Left ventricle myocardium superior (tissue), 1 donor: ENCODE measurements at regions of chrX and their contacts with region 1.

Region 1: GRCh38 chrX:17242470-17242869 is 132.5 kb upstream of the NHS start:
- DNase-seq: no peak
- ATAC-seq: peak; percentile 37

Region 2: DNA sequence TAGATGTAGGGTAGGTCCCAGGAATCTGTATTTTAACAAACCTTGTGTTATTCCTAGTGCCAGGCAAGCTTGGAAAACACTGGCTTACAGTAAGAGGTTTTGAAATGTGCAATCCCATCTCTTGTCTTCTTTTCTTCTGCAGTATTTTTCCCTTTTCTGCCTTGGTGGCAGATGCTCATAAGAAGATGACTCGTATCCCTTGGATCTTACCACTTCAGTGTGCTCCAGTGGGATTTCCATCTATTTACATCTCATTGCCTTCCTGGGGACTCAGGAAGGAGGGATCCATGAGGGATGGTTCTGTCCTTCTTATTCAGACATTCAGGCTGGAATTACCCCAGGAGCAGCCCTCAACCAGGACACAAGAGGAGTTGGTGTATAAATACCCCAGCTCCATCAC is 269.1 kb after region 1 on chrX:
- intact Hi-C with region 1: no loop called
- DNase-seq: no peak
- ATAC-seq: no peak

Region 3: DNA sequence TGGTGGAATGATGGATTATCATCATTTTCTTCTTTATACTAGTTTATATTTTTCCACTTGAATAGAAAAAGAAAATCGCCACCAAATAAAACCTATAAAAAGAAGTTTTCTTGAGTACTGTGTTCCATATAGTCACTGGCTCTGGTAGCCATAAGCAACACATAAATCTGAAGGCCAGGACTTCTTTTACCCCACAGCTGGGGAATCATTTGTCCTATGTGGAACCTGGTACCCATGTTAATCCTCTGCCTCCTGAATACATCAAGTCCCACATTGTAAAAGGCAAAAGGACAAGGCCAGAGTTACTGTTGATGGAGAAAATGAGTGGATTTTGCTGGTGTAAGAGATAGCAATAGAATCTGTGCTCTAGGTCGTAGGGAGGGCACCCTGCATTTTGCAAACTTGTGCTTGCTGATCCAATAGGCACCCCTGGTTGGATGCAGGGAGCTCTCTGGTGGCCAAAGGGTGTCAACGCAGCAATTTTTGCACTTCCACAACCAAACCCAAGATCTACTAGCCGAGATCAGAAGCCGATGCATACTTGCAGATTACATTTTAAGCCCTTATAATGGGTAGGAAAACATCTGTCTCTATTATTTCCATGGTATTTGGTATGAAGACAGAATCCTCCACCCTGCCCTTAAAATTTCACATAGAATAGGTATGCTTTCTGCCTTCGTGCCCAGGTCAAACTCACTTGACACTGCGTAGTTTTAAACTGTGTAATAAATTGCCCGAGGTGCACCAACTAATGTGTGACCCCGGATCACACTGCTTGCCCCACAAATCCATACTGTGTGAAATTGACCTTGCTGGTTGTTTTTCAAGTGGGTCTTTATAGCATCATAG is 348.6 kb after region 1 on chrX:
- intact Hi-C with region 1: loop called (anchors 5 kb)
- DNase-seq: peak; percentile 49
- ATAC-seq: peak; percentile 95

Region 4: DNA sequence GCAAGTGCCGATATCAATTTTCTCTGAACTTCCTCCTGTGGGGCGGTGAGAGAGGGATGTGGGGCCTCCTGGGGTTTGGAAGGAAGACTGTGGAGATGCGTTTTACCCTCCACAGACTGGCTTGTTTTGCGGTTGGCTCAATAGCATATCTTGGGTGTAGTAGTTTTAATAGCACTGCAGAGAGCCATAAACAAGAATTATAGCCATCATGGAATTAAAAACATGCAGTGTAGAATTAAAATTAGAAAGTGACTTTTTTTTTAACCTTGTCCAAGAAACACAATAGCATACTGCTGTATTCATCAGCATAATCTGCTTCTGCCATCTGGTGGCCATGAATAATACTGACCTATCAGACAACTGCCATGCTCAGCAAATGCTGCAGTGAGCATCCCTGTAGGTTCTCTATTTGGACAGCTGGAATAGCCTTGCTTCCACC is 447.5 kb after region 1 on chrX:
- intact Hi-C with region 1: loop called (anchors 2 kb)
- DNase-seq: no peak
- ATAC-seq: peak; percentile 72